ENCODE measurements at regions of chr7 and their contacts with region 1.

Region 1: GRCh38 chr7:29748286-29749108 is 57.8 kb upstream of the WIPF3 start:
- DNase-seq: no peak
- ATAC-seq: peak in 3 of 4 donors; percentile 65 to 80 (median 75)
- H3K4me3 ChIP-seq: no peak overlapping the region
- H3K27ac ChIP-seq: peak overlapping the region in 1 of 12 donors; percentile 57
- H3K4me1 ChIP-seq: peaks cover 0 to 7% (median 0%) of the 10 kb centered on the region in 12 donors
- H3K27me3 ChIP-seq: no peaks in the 10 kb centered on the region
- CTCF ChIP-seq: peak; percentile 44 to 80 (median 64)
- POLR2A ChIP-seq: no peak

Region 2: GRCh38 chr7:29639881-29640595 is 108.5 kb before region 1 on chr7:
- intact Hi-C with region 1: loop called in 2 of 10 experiments (anchors 10 kb)
- DNase-seq: no peak
- ATAC-seq: no peak
- H3K4me3 ChIP-seq: no peak overlapping the region
- H3K27ac ChIP-seq: no peak overlapping the region
- H3K4me1 ChIP-seq: no peaks in the 10 kb centered on the region
- H3K27me3 ChIP-seq: no peaks in the 10 kb centered on the region
- CTCF ChIP-seq: no peak
- POLR2A ChIP-seq: no peak

Region 3: GRCh38 chr7:29764227-29764626 is 15.7 kb after region 1 on chr7:
- intact Hi-C with region 1: no loop called
- DNase-seq: no peak
- ATAC-seq: no peak
- H3K4me3 ChIP-seq: no peak overlapping the region
- H3K27ac ChIP-seq: no peak overlapping the region
- H3K4me1 ChIP-seq: peaks cover 0 to 17% (median 0%) of the 10 kb centered on the region in 12 donors
- H3K27me3 ChIP-seq: no peaks in the 10 kb centered on the region
- CTCF ChIP-seq: peak in 6 of 12 donors; percentile 9 to 37 (median 22)
- POLR2A ChIP-seq: no peak

Region 4: DNA sequence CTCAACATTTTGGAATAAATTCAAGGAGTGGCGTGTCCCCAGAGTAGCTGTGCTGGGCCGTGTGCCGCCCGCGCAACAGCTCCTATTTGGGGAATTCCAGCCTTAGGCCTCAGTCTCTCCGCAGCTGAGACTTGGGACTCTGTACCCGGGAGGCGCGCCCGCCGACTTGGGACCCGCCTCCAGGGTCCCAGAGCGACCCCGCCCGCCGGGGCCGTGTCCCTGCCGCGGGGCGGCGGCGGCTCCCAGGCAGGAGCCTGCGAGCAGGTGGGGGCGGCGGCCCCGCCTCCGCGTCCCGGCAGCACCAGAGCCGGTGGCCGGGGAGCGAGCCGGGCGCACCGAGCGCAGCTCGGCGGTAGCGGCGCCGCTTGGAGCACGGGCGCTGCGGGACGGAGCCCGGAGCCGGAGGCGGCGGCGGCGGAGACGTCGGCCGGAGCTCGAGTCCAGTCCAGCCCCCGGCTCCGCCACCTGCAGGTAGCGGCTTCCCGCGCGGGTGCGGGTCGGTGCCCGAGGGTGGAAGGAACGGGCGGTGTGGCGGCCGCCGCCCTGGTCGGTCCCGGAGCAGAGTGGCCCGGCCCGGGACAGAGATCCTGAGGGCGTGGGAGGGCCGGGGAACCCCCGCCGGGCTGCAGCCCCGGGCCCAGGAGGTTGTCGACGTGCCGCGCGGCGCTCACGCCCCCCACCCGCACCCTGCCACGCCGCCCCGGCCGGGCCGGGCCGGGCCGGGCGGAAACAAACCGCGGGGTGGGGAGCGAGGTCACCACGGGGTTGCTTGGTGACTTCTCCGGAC is 57.9 kb after region 1 on chr7 and contains the start of gene WIPF3:
- intact Hi-C with region 1: loop called in 3 of 10 experiments (anchors 5 to 10 kb)
- DNase-seq: peak; percentile 30 to 71 (median 50)
- ATAC-seq: peak; percentile 25 to 82 (median 75)
- H3K4me3 ChIP-seq: peak within 1 kb of the TSS; percentile 57 to 81 (median 65)
- H3K27ac ChIP-seq: peak within 1 kb of the TSS in 11 of 12 donors; percentile 27 to 87 (median 69)
- H3K4me1 ChIP-seq: peaks cover 0 to 20% (median 6%) of the 10 kb centered on the region in 12 donors
- H3K27me3 ChIP-seq: peaks cover 0 to 49% (median 0%) of the 10 kb centered on the region in 9 donors
- CTCF ChIP-seq: peak in 4 of 12 donors; percentile 4 to 22 (median 9)
- POLR2A ChIP-seq: no peak
- total RNA-seq, gene WIPF3: 2.6 to 16.5 (median 6.8) TPM

Region 5: GRCh38 chr7:29921404-29922010 is 173.0 kb after region 1 on chr7:
- intact Hi-C with region 1: loop called (anchors 1 to 5 kb)
- DNase-seq: peak in 3 of 5 donors; percentile 35 to 43 (median 42)
- ATAC-seq: peak; percentile 62 to 89 (median 84)
- H3K4me3 ChIP-seq: no peak overlapping the region
- H3K27ac ChIP-seq: no peak overlapping the region
- H3K4me1 ChIP-seq: peaks cover 0 to 6% (median 0%) of the 10 kb centered on the region in 12 donors
- H3K27me3 ChIP-seq: no peaks in the 10 kb centered on the region
- CTCF ChIP-seq: peak; percentile 82 to 94 (median 88)
- POLR2A ChIP-seq: no peak

Region 6: GRCh38 chr7:30074422-30075030 is 326.0 kb after region 1 on chr7:
- intact Hi-C with region 1: loop called in 1 of 10 experiments (anchors 10 kb)
- DNase-seq: no peak
- ATAC-seq: peak in 1 of 4 donors; percentile 34
- H3K4me3 ChIP-seq: no peak overlapping the region
- H3K27ac ChIP-seq: no peak overlapping the region
- H3K4me1 ChIP-seq: peaks cover 0 to 6% (median 0%) of the 10 kb centered on the region in 12 donors
- H3K27me3 ChIP-seq: no peaks in the 10 kb centered on the region
- CTCF ChIP-seq: peak in 11 of 12 donors; percentile 18 to 57 (median 38)
- POLR2A ChIP-seq: no peak

Measured in heart left ventricle (tissue), 16 donors.